ENCODE measurements at regions of chr1 and their contacts with region 1.

Region 1: DNA sequence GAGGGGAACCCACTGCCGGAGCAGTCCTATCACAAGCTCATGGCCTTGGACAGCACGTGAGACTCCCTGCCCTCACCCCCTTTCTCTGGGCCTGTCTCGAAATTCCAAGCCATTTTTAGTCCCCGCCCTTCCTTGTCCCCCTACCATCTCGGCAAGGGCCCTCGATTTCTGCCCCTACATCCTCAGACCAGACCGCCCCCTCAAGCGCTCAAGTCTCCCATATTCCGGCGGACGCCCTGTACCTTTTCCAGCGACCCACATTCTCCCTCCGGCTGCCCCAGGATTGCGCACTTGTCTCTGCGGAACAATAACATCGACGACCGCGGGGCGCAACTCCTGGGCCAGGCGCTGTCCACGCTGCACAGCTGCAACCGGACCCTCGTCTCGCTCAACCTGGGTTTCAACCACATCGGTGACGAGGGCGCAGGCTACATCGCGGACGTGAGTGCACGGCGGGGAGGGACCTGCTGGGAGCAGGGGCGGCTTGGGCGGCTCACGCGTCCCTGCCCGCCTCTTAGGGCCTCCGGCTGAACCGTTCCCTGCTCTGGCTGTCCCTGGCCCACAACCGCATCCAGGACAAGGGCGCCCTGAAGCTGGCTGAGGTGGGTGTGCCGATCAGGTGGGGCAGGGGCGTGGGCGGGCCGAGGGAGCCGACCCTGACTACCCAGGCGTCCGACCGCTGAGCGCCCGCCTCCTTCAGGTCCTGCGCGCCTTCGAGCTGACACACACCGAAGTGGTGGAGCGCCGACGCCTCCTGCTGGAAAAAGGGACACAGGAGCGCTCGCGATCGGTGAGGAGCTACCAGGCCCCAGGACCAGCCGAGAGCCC is 7.0 kb downstream of the LRRC71 start:
- DNase-seq: peak; percentile 68 to 79
- H3K4me3 ChIP-seq: peak overlapping the region; percentile 64
- H3K27ac ChIP-seq: no peak overlapping the region
- H3K4me1 ChIP-seq: peaks cover 30% of the 10 kb centered on the region
- H3K27me3 ChIP-seq: no peaks in the 10 kb centered on the region
- CTCF ChIP-seq: peak; percentile 77

Region 2: GRCh38 chr1:156625436-156626078 is 301.9 kb before region 1 on chr1:
- CTCF ChIA-PET with region 1: interaction called, 7 read pairs
- POLR2A ChIA-PET with region 1: no interaction called
- intact Hi-C with region 1: loop called (anchors 10 kb)
- DNase-seq: peak in 1 of 2 experiments; percentile 32
- H3K4me3 ChIP-seq: no peak overlapping the region
- H3K27ac ChIP-seq: no peak overlapping the region
- H3K4me1 ChIP-seq: peaks cover 26% of the 10 kb centered on the region
- H3K27me3 ChIP-seq: peaks cover 13% of the 10 kb centered on the region; the same call in 1 of the 2 replicates
- CTCF ChIP-seq: peak; percentile 92

Region 3: GRCh38 chr1:156797212-156797871 is 130.1 kb before region 1 on chr1:
- CTCF ChIA-PET with region 1: no interaction called
- POLR2A ChIA-PET with region 1: no interaction called
- intact Hi-C with region 1: loop called (anchors 2 kb)
- DNase-seq: peak; percentile 41 to 54
- H3K4me3 ChIP-seq: no peak overlapping the region
- H3K27ac ChIP-seq: no peak overlapping the region
- H3K4me1 ChIP-seq: no peaks in the 10 kb centered on the region
- H3K27me3 ChIP-seq: no peaks in the 10 kb centered on the region
- CTCF ChIP-seq: peak; percentile 90

Region 4: DNA sequence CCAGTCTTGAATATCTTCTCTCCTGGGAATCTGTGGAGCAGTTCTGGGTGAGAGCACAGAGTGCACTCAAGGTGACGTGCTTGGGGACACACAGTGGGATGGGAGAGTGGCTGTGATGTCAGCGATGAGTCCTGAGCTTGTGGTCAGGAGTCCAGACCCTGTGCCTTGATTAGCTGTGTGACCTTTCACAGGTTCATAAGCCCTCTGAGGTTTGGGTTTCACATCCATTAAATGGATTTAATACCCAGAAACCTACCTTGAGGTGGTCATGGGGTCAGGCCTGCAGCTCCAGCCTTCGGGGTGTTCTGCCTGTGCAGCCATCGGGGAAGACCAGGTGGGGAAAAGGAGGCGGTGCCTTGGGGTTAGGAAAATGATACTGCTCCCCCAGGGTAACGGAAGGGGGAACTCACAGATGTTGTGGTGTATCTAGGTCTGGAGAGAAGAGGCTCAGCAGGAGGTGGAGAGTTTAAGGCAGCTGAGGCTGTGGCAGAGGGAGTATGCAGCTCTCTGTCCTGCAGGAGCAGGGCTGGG is 249.2 kb after region 1 on chr1:
- CTCF ChIA-PET with region 1: no interaction called
- POLR2A ChIA-PET with region 1: no interaction called
- intact Hi-C with region 1: no loop called
- DNase-seq: no peak
- H3K4me3 ChIP-seq: no peak overlapping the region
- H3K27ac ChIP-seq: no peak overlapping the region
- H3K4me1 ChIP-seq: no peaks in the 10 kb centered on the region
- H3K27me3 ChIP-seq: peaks cover 69% of the 10 kb centered on the region; the same call in 1 of the 2 replicates
- CTCF ChIP-seq: no peak

Region 5: DNA sequence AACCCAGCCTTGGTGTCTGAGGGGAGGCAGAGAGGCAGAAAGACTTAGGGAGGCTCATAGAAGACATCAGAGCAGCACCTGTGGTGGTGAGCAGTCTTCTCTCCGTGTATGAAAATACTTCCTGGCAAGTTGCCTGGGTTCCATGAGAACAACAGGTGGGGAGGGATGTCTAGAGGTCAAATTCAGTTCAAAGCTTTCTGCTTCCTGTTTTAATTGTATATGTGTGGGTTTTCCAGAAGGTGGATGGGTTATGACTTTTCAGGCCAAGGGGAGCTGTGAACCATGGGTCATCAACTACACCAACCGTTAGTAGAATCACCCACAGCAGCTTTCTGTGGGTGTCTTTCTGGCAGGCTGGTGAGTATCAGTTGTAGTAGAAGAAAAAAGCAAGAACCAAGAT is 853.6 kb after region 1 on chr1:
- CTCF ChIA-PET with region 1: no interaction called
- POLR2A ChIA-PET with region 1: no interaction called
- intact Hi-C with region 1: no loop called
- DNase-seq: no peak
- H3K4me3 ChIP-seq: no peak overlapping the region
- H3K27ac ChIP-seq: no peak overlapping the region
- H3K4me1 ChIP-seq: no peaks in the 10 kb centered on the region
- H3K27me3 ChIP-seq: no peaks in the 10 kb centered on the region
- CTCF ChIP-seq: no peak